Aorta (tissue), 5 donors: ENCODE measurements at regions of chr10 and their contacts with region 1.

Region 1: GRCh38 chr10:119680050-119680449 is 28.9 kb downstream of the BAG3 start:
- DNase-seq: peak in 1 of 2 donors; percentile 66
- ATAC-seq: peak; percentile 4
- H3K4me3 ChIP-seq: no peak overlapping the region
- H3K27ac ChIP-seq: peak overlapping the region; percentile 16 to 62
- H3K4me1 ChIP-seq: peaks cover 0 to 6% of the 10 kb centered on the region in 2 donors
- H3K27me3 ChIP-seq: no peaks in the 10 kb centered on the region

Region 2: GRCh38 chr10:119588071-119588470 is 92.0 kb before region 1 on chr10:
- intact Hi-C with region 1: no loop called
- DNase-seq: no peak
- ATAC-seq: no peak
- H3K4me3 ChIP-seq: no peak overlapping the region
- H3K27ac ChIP-seq: no peak overlapping the region
- H3K4me1 ChIP-seq: peaks cover 2 to 3% of the 10 kb centered on the region in 2 donors
- H3K27me3 ChIP-seq: no peaks in the 10 kb centered on the region

Region 3: DNA sequence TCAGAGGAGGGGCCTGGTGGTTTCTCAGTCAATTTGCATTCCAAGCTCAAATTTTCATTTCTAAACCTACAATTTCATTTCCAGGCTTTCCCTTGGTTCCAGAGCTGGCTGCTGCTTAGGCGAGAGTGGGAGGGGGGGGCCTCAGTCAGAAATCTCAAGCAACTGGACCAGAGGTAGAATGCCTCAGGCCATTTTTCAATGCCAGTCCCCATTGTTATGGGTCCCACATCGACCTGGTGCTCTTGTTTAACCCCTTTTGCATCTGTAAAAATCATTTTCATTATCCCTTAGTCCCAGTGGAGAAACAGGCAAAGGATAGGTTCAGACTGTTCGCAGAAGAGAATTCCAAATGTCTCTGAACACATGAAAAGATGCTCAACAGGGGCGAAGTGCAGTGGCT is 42.4 kb before region 1 on chr10:
- intact Hi-C with region 1: no loop called
- DNase-seq: no peak
- ATAC-seq: no peak
- H3K4me3 ChIP-seq: no peak overlapping the region
- H3K27ac ChIP-seq: no peak overlapping the region
- H3K4me1 ChIP-seq: no peaks in the 10 kb centered on the region
- H3K27me3 ChIP-seq: no peaks in the 10 kb centered on the region

Region 4: GRCh38 chr10:119650692-119651513 is 29.1 kb before region 1 on chr10 and contains the start of gene BAG3:
- intact Hi-C with region 1: loop called in 1 of 2 experiments (anchors 2 kb)
- DNase-seq: peak; percentile 97 to 98
- ATAC-seq: peak; percentile 94
- H3K4me3 ChIP-seq: peak within 1 kb of the TSS; percentile 87 to 95
- H3K27ac ChIP-seq: peak within 1 kb of the TSS; percentile 97 to 99
- H3K4me1 ChIP-seq: peaks cover 0 to 1% of the 10 kb centered on the region in 2 donors
- H3K27me3 ChIP-seq: no peaks in the 10 kb centered on the region
- total RNA-seq, gene BAG3: 65.8 to 85.1 TPM

Region 5: DNA sequence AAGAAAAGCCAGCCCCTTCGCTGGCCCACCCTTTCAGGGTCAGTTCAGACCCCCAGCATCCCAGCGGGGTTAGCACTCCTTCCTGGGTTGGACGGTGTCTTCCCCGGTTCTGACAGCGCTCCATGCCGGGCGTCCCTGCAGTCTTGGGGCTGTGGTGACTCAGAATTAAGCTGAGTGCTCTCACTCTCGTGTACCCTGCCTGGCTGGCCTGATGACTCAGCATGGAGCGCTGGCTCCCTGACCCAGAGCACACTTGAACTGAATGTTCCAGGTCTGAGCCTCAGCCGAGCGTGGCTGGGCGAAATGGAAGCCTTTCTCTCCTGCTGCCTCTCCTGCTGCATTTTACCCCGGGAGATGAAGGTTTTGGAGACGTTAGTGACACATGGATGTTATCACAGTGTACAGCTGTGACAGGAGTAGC is 21.8 kb before region 1 on chr10:
- intact Hi-C with region 1: loop called in 1 of 2 experiments (anchors 2 kb)
- DNase-seq: peak; percentile 90 to 94
- ATAC-seq: peak; percentile 94
- H3K4me3 ChIP-seq: no peak overlapping the region
- H3K27ac ChIP-seq: peak overlapping the region in 1 of 2 donors; percentile 38
- H3K4me1 ChIP-seq: peaks cover 0 to 10% of the 10 kb centered on the region in 2 donors
- H3K27me3 ChIP-seq: no peaks in the 10 kb centered on the region

Region 6: GRCh38 chr10:119725828-119726675 is 46.0 kb after region 1 on chr10 and contains the start of gene INPP5F:
- intact Hi-C with region 1: loop called (anchors 5 to 10 kb)
- DNase-seq: peak; percentile 100
- ATAC-seq: peak; percentile 99
- H3K4me3 ChIP-seq: peak within 1 kb of the TSS; percentile 59 to 64
- H3K27ac ChIP-seq: peak within 1 kb of the TSS; percentile 28 to 58
- H3K4me1 ChIP-seq: peaks cover 0 to 6% of the 10 kb centered on the region in 2 donors
- H3K27me3 ChIP-seq: no peaks in the 10 kb centered on the region
- total RNA-seq, gene INPP5F: 23.1 to 23.9 TPM

Region 7: DNA sequence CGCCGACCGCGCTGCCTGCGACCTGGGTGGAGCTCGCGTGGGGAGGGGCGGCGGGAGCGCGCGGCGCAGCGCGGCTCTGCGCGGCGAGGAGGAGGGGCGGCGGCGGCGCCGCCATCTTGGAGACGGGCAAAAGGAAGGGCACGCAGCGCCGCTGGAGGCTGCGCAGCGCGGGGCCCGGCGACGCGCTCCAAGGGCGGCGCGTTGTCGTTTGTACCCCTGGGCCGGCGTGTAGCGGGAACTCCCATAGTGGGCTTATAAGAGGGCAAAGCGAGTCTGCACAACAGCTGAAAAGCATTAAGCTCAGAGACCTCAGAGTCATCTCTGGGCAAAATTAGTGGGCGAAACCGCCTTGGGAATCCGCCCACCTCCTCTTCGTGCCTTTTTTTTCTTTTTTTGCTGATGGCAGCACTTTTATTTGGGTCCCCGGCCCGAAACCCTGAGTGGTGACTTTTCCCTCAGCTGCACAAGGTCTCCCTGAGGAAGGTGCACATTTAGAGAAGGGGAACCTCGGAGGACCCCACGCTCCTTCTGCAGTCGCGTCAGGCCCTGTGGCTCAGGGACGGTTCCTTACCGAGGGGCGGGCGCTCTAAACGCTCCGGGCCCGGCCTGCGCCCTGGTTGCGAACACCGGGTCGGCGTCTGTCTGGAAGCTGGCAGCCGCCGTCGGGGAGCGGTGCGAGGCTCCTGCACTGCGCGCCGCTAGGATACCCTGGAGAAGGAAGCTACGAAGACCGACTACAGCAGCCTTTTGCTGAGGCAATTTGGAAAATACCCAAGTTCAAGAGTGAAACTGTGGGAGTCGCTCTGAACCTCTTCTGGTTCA is 193.0 kb after region 1 on chr10:
- intact Hi-C with region 1: loop called in 1 of 2 experiments (anchors 5 kb)
- DNase-seq: peak; percentile 94 to 96
- ATAC-seq: peak; percentile 99
- H3K4me3 ChIP-seq: peak overlapping the region; percentile 95 to 97
- H3K27ac ChIP-seq: peak overlapping the region; percentile 61 to 83
- H3K4me1 ChIP-seq: peaks cover 0 to 4% of the 10 kb centered on the region in 2 donors
- H3K27me3 ChIP-seq: peaks cover 0 to 1% of the 10 kb centered on the region in 2 donors